Natural killer cell (primary cell): ENCODE measurements at regions of chr7 and their contacts with region 1.

Region 1: GRCh38 chr7:32803406-32804141 is 88.0 kb downstream of the KBTBD2 start:
- DNase-seq: no peak
- ATAC-seq: no peak
- H3K4me3 ChIP-seq: no peak overlapping the region
- H3K4me3 Mint-ChIP-seq: no peak overlapping the region
- H3K27ac ChIP-seq: no peak overlapping the region
- H3K27ac Mint-ChIP-seq: no peak overlapping the region
- H3K4me1 ChIP-seq: no peaks in the 10 kb centered on the region
- H3K4me1 Mint-ChIP-seq: no peaks in the 10 kb centered on the region
- H3K27me3 ChIP-seq: no peaks in the 10 kb centered on the region
- H3K27me3 Mint-ChIP-seq: peaks cover 0 to 3% of the 10 kb centered on the region in 2 donors
- CTCF ChIP-seq: no peak

Region 2: DNA sequence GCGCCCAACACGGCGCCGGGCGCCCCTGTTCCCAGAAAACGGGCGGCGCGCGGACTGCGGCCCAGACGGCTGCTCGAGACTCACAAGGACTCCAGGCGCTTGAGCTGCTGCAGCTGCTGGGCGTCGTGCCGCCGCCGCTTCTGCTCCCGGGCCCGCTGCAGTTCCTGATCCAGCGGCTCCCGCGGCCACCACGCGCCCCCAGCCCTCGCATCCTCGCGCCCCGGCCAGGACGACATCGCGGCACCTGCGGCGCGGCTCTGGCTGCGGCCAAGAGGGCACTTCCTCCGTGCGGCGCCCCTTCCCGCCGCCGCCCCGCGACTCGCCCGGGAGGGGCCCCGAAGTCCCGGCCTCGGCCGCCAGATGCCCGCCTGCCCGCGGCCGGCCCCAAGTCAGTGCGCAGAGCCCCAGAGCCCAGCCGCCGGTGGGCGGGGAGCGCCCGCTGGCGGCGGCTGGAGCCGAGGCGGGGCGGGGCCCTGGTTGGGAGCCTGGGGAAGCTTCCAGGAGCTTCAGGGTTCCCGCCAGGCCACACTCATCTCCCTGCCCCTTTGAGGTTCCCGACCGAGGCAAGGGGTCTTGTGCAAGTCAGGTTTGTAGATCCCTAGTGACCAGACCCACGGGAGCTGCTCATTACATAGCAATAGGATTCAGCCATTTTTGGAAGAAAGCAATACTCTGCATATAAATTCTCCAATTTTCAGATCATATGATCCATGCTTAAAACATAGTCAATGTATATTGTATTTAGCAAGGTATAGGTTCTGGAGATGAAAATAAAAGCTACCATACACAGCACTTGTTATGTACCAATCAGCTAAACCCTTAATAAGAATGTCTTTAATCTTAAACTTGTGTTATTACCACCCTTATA is 139.4 kb after region 1 on chr7:
- intact Hi-C with region 1: loop called (anchors 1 kb)
- DNase-seq: peak; percentile 61 to 82
- ATAC-seq: peak; percentile 90 to 92 (median 92)
- H3K4me3 ChIP-seq: peak overlapping the region; percentile 66
- H3K4me3 Mint-ChIP-seq: peak overlapping the region; percentile 97
- H3K27ac ChIP-seq: peak overlapping the region; percentile 57
- H3K27ac Mint-ChIP-seq: peak overlapping the region in 1 of 2 donors; percentile 78
- H3K4me1 ChIP-seq: peaks cover 11% of the 10 kb centered on the region
- H3K4me1 Mint-ChIP-seq: peaks cover 11 to 16% of the 10 kb centered on the region in 2 donors
- H3K27me3 ChIP-seq: no peaks in the 10 kb centered on the region
- H3K27me3 Mint-ChIP-seq: peaks cover under 1 to 12% of the 10 kb centered on the region in 2 donors
- CTCF ChIP-seq: peak; percentile 61

Region 3: DNA sequence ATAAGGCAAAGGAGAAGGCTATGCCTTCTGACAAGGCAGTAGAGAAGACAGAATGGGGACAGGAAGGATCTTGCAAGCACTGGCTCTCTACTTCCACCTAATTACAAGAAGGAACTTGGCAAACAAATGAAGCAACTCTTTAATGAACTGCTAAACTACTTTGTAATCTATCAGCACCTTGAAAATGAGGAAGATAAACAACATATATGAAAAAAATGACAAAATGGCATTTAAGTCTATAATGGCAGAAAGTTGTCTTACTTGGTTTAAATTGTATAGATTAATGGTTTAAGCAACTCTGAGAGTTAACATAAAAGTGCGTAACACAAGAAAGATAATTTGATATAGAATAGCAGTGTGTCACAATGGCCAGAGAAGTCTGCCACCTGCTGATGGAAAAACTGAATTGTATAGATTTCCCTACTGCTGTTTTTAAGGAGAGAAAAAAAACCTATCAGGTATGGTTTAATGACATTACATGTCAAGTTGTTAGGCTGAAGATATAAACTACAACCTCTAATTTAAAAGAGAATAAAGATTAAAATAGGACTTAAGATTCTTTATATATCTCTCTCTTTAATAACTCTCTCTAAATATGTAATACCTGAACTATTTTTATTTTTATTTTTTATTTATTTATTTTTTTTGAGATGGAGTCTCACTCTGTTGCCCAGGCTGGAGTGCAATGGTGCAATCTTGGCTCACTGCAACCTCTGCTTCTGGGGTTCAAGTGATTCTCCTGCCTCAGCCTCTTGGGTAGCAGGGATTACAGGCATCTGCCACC is 247.2 kb after region 1 on chr7:
- intact Hi-C with region 1: loop called (anchors 2 kb)
- DNase-seq: peak in 1 of 2 donors; percentile 77
- ATAC-seq: peak; percentile 52 to 68 (median 57)
- H3K4me3 ChIP-seq: no peak overlapping the region
- H3K4me3 Mint-ChIP-seq: no peak overlapping the region
- H3K27ac ChIP-seq: peak overlapping the region; percentile 41
- H3K27ac Mint-ChIP-seq: peak overlapping the region; percentile 46 to 83
- H3K4me1 ChIP-seq: peaks cover 14% of the 10 kb centered on the region
- H3K4me1 Mint-ChIP-seq: peaks cover 31 to 35% of the 10 kb centered on the region in 2 donors
- H3K27me3 ChIP-seq: no peaks in the 10 kb centered on the region
- H3K27me3 Mint-ChIP-seq: no peaks in the 10 kb centered on the region
- CTCF ChIP-seq: peak; percentile 74